ENCODE measurements at regions of chr5 and their contacts with region 1.

Region 1: DNA sequence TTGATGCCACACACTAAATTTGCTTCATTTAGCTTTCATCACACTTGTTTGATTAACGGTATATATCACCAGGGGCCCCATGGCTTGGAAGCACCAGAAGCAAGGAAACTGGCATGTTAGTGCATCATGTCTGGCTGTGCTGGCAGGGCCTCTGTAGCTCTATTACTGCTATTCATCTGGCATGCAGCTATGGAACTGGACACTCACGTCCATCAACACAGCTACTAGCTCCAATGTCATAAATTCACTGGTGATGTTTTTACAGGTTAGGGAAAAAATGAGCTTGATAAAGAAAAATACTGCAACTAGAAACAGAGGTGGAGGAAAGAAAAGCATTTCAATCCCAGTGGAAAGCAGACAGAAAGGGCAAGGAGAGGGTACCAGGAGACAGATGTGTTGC is 343.2 kb downstream of the DEPDC1B start:
- DNase-seq: no peak
- ATAC-seq: no peak
- H3K4me3 ChIP-seq: no peak overlapping the region
- H3K27ac ChIP-seq: no peak overlapping the region
- H3K4me1 ChIP-seq: no peaks in the 10 kb centered on the region
- H3K27me3 ChIP-seq: no peaks in the 10 kb centered on the region
- CTCF ChIP-seq: no peak
- POLR2A ChIP-seq: no peak

Region 2: DNA sequence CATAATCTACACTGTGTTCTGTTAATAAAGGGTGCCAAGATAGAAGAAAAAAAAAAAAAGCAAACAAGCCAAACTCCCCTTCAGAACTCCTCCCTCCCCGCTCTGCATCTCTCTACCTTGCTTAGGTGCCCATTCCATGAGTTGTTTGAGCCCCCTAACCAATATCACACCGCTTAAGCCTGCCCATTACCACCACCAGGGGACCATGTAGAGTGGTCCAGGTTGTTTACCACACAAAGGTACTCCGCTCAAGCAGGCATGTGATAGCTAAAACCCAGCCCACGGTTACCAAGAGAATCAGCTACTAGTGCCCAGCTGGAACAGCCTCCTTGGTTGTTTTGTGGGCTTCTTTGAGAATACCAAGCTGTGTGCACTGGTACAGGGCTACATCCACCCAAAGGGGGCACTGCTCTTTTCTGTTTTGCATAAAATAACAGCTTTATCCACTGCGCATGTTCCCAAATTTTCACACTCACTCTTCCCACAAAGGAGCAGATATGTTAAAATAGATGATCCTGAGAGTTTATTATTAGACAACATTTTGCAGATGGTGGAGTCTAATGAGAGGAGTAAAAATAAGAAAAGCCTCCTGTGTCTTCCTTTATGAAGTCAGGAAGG is 39.1 kb after region 1 on chr5:
- intact Hi-C with region 1: loop called in 1 of 10 experiments (anchors 2 kb)
- DNase-seq: no peak
- ATAC-seq: no peak
- H3K4me3 ChIP-seq: no peak overlapping the region
- H3K27ac ChIP-seq: no peak overlapping the region
- H3K4me1 ChIP-seq: no peaks in the 10 kb centered on the region
- H3K27me3 ChIP-seq: no peaks in the 10 kb centered on the region
- CTCF ChIP-seq: no peak
- POLR2A ChIP-seq: no peak